Activated CD8-positive, alpha-beta T cell treated with anti-CD3 and anti-CD28 coated beads, Interleukin-2, amount 10 ng/mL, durations not matched to agents 7 days and 5 days (primary cell): ENCODE measurements at regions of chr1 and their contacts with region 1.

Region 1: GRCh38 chr1:169348383-169349036 is 19.1 kb downstream of the NME7 start:
- DNase-seq: peak; percentile 46
- ATAC-seq: no peak
- H3K4me3 Mint-ChIP-seq: no peak overlapping the region
- H3K27ac Mint-ChIP-seq: no peak overlapping the region
- H3K4me1 Mint-ChIP-seq: peaks cover 18% of the 10 kb centered on the region
- H3K27me3 Mint-ChIP-seq: no peaks in the 10 kb centered on the region

Region 2: DNA sequence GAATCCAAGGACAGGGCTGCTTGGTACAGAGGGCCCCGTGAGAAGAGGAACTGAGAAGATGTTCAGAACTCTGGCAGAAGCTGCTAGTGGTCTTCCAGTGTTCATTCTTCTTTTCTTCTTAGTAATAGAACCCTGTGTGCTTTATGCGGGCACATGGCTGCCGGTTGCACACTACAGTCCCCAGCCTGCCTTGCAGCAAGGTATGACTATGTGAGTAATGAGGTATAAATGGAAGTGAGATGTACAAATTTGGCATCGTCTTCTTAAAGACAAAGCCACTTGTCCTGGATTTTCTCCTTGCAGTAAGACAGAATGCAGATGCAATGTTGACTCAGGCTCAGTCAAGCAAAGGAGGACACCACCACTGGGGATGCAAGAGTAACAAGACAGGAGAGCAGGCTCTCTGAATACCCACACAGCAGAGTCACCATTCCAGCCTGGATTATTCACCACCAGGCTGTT is 257.0 kb before region 1 on chr1:
- CTCF ChIA-PET with region 1: interaction called, 18 read pairs
- POLR2A ChIA-PET with region 1: no interaction called
- DNase-seq: no peak
- ATAC-seq: no peak
- H3K4me3 Mint-ChIP-seq: no peak overlapping the region
- H3K27ac Mint-ChIP-seq: no peak overlapping the region
- H3K4me1 Mint-ChIP-seq: peaks cover 3% of the 10 kb centered on the region
- H3K27me3 Mint-ChIP-seq: peaks cover 11% of the 10 kb centered on the region

Region 3: GRCh38 chr1:169106095-169106920 is 242.2 kb before region 1 on chr1 and contains the start of gene ATP1B1:
- CTCF ChIA-PET with region 1: interaction called, 14 read pairs
- POLR2A ChIA-PET with region 1: no interaction called
- DNase-seq: peak; percentile 86
- ATAC-seq: peak; percentile 95
- H3K4me3 Mint-ChIP-seq: peak within 1 kb of the TSS; percentile 77
- H3K27ac Mint-ChIP-seq: peak within 1 kb of the TSS; percentile 84
- H3K4me1 Mint-ChIP-seq: peaks cover 43% of the 10 kb centered on the region
- H3K27me3 Mint-ChIP-seq: peaks cover 10% of the 10 kb centered on the region
- total RNA-seq, gene ATP1B1: 10.7 to 12.0 TPM

Region 4: GRCh38 chr1:169363046-169363730 is 14.7 kb after region 1 on chr1:
- CTCF ChIA-PET with region 1: interaction called, 27 read pairs
- POLR2A ChIA-PET with region 1: interaction called, 4 read pairs
- DNase-seq: peak; percentile 55
- ATAC-seq: peak; percentile 12
- H3K4me3 Mint-ChIP-seq: peak overlapping the region; percentile 32
- H3K27ac Mint-ChIP-seq: peak overlapping the region; percentile 66
- H3K4me1 Mint-ChIP-seq: peaks cover 22% of the 10 kb centered on the region
- H3K27me3 Mint-ChIP-seq: no peaks in the 10 kb centered on the region